Common myeloid progenitor, CD34-positive (primary cell): ENCODE measurements at regions of chr1 and their contacts with region 1.

Region 1: DNA sequence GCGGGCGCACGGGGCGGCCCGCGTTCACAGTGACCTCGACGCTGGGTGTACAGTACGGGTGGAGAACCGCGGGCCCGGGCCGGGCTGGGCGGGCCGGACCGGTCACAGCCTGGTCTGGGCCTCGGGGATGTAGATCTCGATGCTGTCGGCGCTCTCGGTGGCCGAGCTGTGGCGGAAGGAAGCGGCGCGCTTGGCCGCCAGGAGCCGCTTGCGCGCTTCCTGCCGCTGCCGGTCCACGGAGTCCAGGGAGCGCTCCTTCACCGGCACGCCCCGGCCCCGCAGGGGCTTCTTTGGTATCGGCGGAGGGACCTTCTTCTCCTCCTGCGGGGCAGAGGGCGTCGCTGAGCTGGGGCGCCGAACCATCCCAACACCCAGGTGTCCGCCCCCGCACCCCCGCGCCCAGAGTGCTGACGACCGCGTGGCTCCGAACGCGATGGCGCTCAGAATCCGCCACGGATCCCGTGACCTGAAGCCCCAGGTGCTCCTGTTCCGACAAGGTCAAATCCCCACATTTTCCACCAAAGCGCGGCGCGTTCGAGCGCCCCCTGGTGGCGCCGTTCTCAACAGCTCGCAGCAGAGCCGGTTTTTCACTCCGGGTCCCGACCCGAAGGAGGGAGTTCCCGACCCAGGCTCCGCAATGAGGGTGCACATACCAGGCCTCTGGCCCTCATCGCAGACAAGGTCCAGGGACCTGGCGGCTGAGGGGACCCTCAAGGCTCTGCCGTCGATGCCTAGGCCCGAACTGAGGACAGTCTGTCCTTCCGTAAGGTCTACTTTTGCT is 6.6 kb upstream of the SMIM12 start:
- DNase-seq: peak; percentile 82 to 85 (median 83)
- H3K4me3 ChIP-seq: peak overlapping the region; percentile 39 to 77 (median 70)
- H3K27ac ChIP-seq: no peak overlapping the region
- H3K4me1 ChIP-seq: peaks cover 0 to 27% (median 22%) of the 10 kb centered on the region in 4 experiments
- H3K27me3 ChIP-seq: peaks cover 0 to under 1% (median 0%) of the 10 kb centered on the region in 5 experiments

Region 2: DNA sequence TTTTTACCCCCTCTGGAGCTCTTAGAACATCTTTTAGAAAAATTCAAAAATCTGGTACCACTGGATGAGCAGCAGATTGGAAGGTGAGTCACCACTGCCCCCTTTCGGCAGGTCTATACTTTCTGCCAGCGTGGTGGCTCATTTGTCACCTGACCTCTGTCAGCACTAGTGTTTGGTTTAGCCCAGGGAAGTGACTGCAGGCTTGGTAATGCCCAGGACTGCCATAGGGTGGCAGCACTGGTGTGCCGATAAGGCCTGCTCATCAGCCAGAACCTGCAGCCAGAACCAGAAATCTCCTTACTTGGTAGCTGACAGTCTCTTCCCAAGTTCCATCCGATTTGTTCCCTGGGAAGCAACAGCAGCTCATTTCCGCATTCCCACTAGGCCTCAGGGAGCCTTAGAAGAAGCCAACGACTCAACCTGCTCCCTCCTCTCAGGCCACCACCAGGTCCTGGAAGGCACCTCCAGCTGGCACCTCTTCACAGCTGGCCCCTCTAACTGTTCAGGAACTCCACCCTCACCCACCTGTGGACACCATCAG is 13.4 kb before region 1 on chr1:
- CTCF ChIA-PET with region 1: interaction called, 16 read pairs
- POLR2A ChIA-PET with region 1: no interaction called
- DNase-seq: peak; percentile 95 to 98 (median 97)
- H3K4me3 ChIP-seq: no peak overlapping the region
- H3K27ac ChIP-seq: no peak overlapping the region
- H3K4me1 ChIP-seq: peaks cover 0 to 3% (median 1%) of the 10 kb centered on the region in 4 experiments
- H3K27me3 ChIP-seq: no peaks in the 10 kb centered on the region

Region 3: GRCh38 chr1:34885405-34886247 is 19.5 kb after region 1 on chr1:
- CTCF ChIA-PET with region 1: interaction called, 13 read pairs
- POLR2A ChIA-PET with region 1: interaction called, 3 read pairs
- DNase-seq: peak in 2 of 3 donors; percentile 40 to 49
- H3K4me3 ChIP-seq: peak overlapping the region in 5 of 7 experiments; percentile 13 to 68 (median 62)
- H3K27ac ChIP-seq: no peak overlapping the region
- H3K4me1 ChIP-seq: peaks cover 0 to 13% (median 8%) of the 10 kb centered on the region in 4 experiments
- H3K27me3 ChIP-seq: peaks cover 13 to 63% (median 31%) of the 10 kb centered on the region in 5 experiments

Region 4: GRCh38 chr1:34950428-34950827 is 84.3 kb after region 1 on chr1:
- CTCF ChIA-PET with region 1: no interaction called
- POLR2A ChIA-PET with region 1: no interaction called
- DNase-seq: no peak
- H3K4me3 ChIP-seq: no peak overlapping the region
- H3K27ac ChIP-seq: no peak overlapping the region
- H3K4me1 ChIP-seq: no peaks in the 10 kb centered on the region
- H3K27me3 ChIP-seq: peaks cover 0 to 1% (median 0%) of the 10 kb centered on the region in 5 experiments